CD8-positive, alpha-beta memory T cell (primary cell): ENCODE measurements at regions of chr9 and their contacts with region 1.

Region 1: GRCh38 chr9:92716557-92716956 is 46.6 kb upstream of the IPPK start:
- DNase-seq: peak; percentile 60 to 85 (median 76)
- H3K4me3 ChIP-seq: no peak overlapping the region
- H3K4me3 Mint-ChIP-seq: no peak overlapping the region
- H3K27ac ChIP-seq: no peak overlapping the region
- H3K27ac Mint-ChIP-seq: peak overlapping the region in 5 of 8 donors; percentile 15 to 84 (median 60)
- H3K4me1 ChIP-seq: peaks cover 16% of the 10 kb centered on the region
- H3K4me1 Mint-ChIP-seq: peaks cover 17 to 27% (median 21%) of the 10 kb centered on the region in 3 donors
- H3K27me3 ChIP-seq: no peaks in the 10 kb centered on the region
- H3K27me3 Mint-ChIP-seq: no peaks in the 10 kb centered on the region

Region 2: GRCh38 chr9:92728831-92729734 is 12.5 kb after region 1 on chr9:
- CTCF ChIA-PET with region 1: interaction called, 10 read pairs
- POLR2A ChIA-PET with region 1: no interaction called
- DNase-seq: peak in 1 of 5 donors; percentile 35
- H3K4me3 ChIP-seq: no peak overlapping the region
- H3K4me3 Mint-ChIP-seq: no peak overlapping the region
- H3K27ac ChIP-seq: no peak overlapping the region
- H3K27ac Mint-ChIP-seq: peak overlapping the region in 3 of 8 donors; percentile 11 to 29 (median 29)
- H3K4me1 ChIP-seq: no peaks in the 10 kb centered on the region
- H3K4me1 Mint-ChIP-seq: peaks cover 24 to 42% (median 31%) of the 10 kb centered on the region in 3 donors
- H3K27me3 ChIP-seq: no peaks in the 10 kb centered on the region
- H3K27me3 Mint-ChIP-seq: no peaks in the 10 kb centered on the region

Region 3: GRCh38 chr9:92790542-92791527 is 74.3 kb after region 1 on chr9:
- CTCF ChIA-PET with region 1: interaction called, 41 read pairs
- POLR2A ChIA-PET with region 1: interaction called, 3 read pairs
- DNase-seq: peak; percentile 55 to 83 (median 65)
- H3K4me3 ChIP-seq: no peak overlapping the region
- H3K4me3 Mint-ChIP-seq: peak overlapping the region in 1 of 7 donors; percentile 45
- H3K27ac ChIP-seq: no peak overlapping the region
- H3K27ac Mint-ChIP-seq: peak overlapping the region in 4 of 8 donors; percentile 36 to 96 (median 61)
- H3K4me1 ChIP-seq: peaks cover 5% of the 10 kb centered on the region
- H3K4me1 Mint-ChIP-seq: peaks cover 2 to 6% (median 6%) of the 10 kb centered on the region in 3 donors
- H3K27me3 ChIP-seq: no peaks in the 10 kb centered on the region
- H3K27me3 Mint-ChIP-seq: peaks cover 2 to 26% of the 10 kb centered on the region in 2 donors